Lower leg skin (tissue), 4 donors: ENCODE measurements at regions of chr1 and their contacts with region 1.

Region 1: DNA sequence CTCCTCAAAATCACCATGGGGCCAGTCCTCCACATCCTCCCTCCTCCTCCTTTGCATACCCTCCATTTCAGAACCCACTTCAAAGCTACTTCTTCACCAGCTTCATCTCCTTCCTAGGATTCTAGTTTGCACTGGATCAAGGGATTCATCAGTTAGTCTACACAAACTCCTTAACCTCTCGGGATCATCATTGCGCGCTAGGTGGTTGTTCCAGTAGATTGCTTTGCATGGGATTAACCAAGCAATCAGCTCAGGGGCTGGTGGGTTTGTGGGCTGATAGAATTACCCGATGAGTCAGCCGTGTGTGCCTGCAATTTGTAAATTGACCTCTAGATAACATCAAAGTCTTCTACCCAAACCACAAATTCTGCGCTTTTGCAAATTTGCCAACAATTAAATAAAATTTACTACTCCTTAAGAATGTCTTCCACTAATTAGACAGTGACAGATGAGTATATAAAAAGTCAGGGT is 7.7 kb downstream of the KANK4 start:
- DNase-seq: no peak
- H3K4me3 ChIP-seq: no peak overlapping the region
- CTCF ChIP-seq: no peak
- POLR2A ChIP-seq: no peak

Region 2: DNA sequence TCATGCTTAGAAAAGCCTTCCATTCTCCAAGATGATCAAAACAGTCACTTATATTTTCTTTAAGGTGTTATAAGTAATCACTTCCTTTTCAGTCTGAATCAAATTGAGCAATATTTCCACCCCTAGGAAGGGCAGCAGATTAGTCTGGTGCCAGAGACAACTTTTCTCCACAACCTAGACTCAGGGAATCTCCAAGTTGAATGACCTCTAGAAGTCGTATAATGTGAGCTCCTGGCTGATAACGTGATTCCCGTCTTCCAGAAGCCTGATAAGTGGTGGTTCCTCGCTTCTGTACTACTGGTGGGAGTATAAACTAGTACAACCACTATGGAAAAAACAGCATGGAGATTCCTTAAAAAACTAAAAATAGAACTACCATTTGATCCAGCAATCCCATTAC is 1713.5 kb after region 1 on chr1:
- intact Hi-C with region 1: loop called (anchors 5 kb)
- DNase-seq: no peak
- H3K4me3 ChIP-seq: no peak overlapping the region
- CTCF ChIP-seq: no peak
- POLR2A ChIP-seq: no peak